ENCODE measurements at regions of chr7 and their contacts with region 1.

Region 1: GRCh38 chr7:93715234-93715633 is 140.7 kb upstream of the CALCR start:
- DNase-seq: peak; percentile 28
- ATAC-seq: peak; percentile 81
- H3K4me3 ChIP-seq: no peak overlapping the region
- H3K27ac ChIP-seq: no peak overlapping the region
- H3K4me1 ChIP-seq: no peaks in the 10 kb centered on the region
- H3K27me3 ChIP-seq: peaks cover 3% of the 10 kb centered on the region; the same call in 1 of the 2 replicates
- CTCF ChIP-seq: peak; percentile 23 to 68 (median 64); a peak in 5 of 6 replicates
- POLR2A ChIP-seq: no peak
- RAD21 ChIP-seq: peak; percentile 56

Region 2: GRCh38 chr7:94087664-94088352 is 372.6 kb after region 1 on chr7:
- CTCF ChIA-PET with region 1: no interaction called
- POLR2A ChIA-PET with region 1: no interaction called
- RAD21 ChIA-PET with region 1: no interaction called
- intact Hi-C with region 1: loop called (anchors 5 kb)
- DNase-seq: peak; percentile 54
- ATAC-seq: peak; percentile 93
- H3K4me3 ChIP-seq: peak overlapping the region in 1 of 2 experiments; percentile 43; a peak in 1 of 4 replicates
- H3K27ac ChIP-seq: no peak overlapping the region
- H3K4me1 ChIP-seq: peaks cover 0 to 3% of the 10 kb centered on the region in 2 experiments; a peak in 1 of 4 replicates
- H3K27me3 ChIP-seq: peaks cover 26% of the 10 kb centered on the region; the same call in 1 of the 2 replicates
- CTCF ChIP-seq: peak; percentile 80 to 88 (median 82)
- POLR2A ChIP-seq: no peak
- RAD21 ChIP-seq: peak; percentile 75

Region 3: DNA sequence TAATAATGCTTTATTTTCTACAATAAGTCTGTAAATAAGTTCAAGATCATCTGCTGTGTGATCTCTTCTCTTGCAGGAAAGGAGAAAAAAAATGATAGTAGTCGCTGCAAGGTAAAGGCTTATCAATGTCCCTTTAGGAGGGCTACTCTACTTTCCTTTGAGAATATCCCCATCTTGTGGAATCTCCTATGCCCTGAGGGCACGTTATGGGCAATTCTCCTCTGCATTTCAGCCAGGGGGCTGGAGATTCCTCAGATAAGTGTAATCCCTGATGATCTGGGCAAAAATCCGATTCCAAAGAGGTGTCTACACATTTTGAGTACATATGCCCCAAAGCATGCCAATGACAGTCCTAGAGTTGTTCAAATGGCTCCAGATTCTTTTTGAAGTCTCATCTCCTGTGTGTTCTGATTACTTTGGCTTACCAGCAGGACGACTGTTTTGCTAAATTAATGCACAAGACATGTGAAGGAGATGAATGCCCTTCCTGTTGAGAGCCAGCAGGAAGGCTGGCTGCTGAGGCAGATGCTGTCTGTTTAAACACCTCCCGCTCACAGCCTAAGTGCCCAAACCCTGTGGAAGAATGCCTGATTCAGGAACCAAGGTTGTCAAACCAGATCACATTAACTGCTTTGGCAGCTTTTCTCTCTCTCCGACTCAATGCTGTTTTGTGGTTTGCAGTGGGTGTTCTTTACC is 508.3 kb after region 1 on chr7:
- CTCF ChIA-PET with region 1: no interaction called
- POLR2A ChIA-PET with region 1: no interaction called
- RAD21 ChIA-PET with region 1: no interaction called
- intact Hi-C with region 1: loop called (anchors 5 kb)
- DNase-seq: peak; percentile 41
- ATAC-seq: peak; percentile 80
- H3K4me3 ChIP-seq: 0 out of 4 replicates have a peak overlapping the region, but pooled peaks of 1 of the 2 experiments have one; percentile 1
- H3K27ac ChIP-seq: no peak overlapping the region
- H3K4me1 ChIP-seq: peaks cover 0 to 9% of the 10 kb centered on the region in 2 experiments; a peak in 1 of 4 replicates
- H3K27me3 ChIP-seq: no peaks in the 10 kb centered on the region
- CTCF ChIP-seq: peak; percentile 35 to 52 (median 50); a peak in 4 of 6 replicates
- POLR2A ChIP-seq: no peak
- RAD21 ChIP-seq: peak; percentile 65

Region 4: DNA sequence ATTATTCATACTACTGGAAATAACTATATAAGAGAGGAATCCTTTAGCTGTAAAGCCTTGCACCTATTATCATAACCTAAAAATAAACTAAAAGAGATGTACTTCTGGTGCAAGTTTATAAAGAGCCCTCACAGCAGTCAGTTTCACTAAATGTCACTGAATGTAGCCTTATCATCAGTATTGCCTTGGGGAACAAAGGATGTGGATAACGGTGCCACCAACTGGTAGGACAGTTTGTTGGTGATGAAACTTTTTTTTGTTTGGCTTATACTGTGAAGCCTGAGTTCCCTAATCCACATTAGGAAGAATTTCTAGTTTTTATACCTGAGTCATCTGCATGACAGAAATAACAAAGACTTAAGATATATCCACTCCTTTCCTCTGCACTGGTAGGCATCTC is 561.6 kb after region 1 on chr7:
- CTCF ChIA-PET with region 1: no interaction called
- POLR2A ChIA-PET with region 1: no interaction called
- RAD21 ChIA-PET with region 1: no interaction called
- intact Hi-C with region 1: loop called (anchors 2 kb)
- DNase-seq: no peak
- ATAC-seq: peak; percentile 81
- H3K4me3 ChIP-seq: no peak overlapping the region
- H3K27ac ChIP-seq: no peak overlapping the region
- H3K4me1 ChIP-seq: no peaks in the 10 kb centered on the region
- H3K27me3 ChIP-seq: 0 out of 2 replicates have a peak, but pooled peaks cover 5% of the 10 kb centered on the region
- CTCF ChIP-seq: peak; percentile 17 to 53 (median 46); a peak in 3 of 6 replicates
- POLR2A ChIP-seq: no peak
- RAD21 ChIP-seq: peak; percentile 66